ENCODE measurements at regions of chr9 and their contacts with region 1.

Region 1: DNA sequence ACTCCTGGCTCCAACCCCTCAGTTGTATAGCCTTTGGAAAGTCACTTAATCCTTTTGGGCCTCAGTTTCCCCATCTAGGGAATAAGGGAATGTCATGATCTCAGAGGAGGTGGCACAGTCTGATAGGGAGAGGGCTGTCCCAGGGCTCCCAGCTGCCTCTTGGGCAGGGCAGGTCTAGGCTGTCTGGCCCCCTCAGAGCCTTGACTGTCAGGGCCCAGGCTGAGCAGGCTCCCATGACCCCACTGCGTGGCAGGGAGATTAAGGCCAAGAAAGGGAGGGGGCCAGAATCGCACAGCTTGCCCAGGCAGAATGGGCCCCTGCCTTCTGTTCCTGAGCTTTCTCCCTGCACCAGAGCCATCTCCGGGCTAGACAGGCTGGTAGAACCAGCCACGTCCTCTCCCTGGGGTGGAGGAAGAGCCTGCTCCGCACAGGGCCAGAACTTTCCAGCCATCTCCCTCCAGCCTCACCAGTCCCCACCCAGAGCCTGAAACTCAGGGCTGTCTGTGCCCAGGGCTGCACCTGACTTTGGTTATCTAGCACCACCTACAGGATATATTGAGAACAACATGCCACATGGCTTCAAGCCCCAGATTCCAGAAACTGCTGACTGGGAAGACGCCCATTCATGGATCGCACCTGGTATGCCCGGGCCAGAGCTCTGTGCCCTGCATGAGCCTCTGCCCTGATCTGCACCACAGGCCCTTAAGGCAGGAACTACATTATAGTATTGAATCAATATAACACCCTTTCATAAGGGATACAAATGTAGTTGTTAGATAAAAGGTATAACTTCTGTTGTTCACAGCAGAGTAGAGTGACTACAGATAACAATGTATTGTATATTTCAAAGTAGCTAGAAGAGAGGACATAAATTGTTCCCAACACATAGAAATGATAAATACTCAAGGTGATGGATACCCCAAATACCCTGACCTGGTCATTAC is 32.0 kb downstream of the NAIF1 start:
- DNase-seq: peak; percentile 78
- H3K4me3 Mint-ChIP-seq: no peak overlapping the region
- H3K27ac Mint-ChIP-seq: peak overlapping the region; percentile 62
- H3K4me1 Mint-ChIP-seq: peaks cover 40% of the 10 kb centered on the region
- H3K27me3 Mint-ChIP-seq: no peaks in the 10 kb centered on the region

Region 2: GRCh38 chr9:127930231-127931091 is 104.6 kb before region 1 on chr9 and contains the start of gene PIP5KL1:
- CTCF ChIA-PET with region 1: interaction called, 18 read pairs
- intact Hi-C with region 1: no loop called
- DNase-seq: peak; percentile 61
- H3K4me3 Mint-ChIP-seq: peak within 1 kb of the TSS; percentile 62
- H3K27ac Mint-ChIP-seq: no peak within 1 kb of the TSS
- H3K4me1 Mint-ChIP-seq: peaks cover 35% of the 10 kb centered on the region
- H3K27me3 Mint-ChIP-seq: peaks cover 6% of the 10 kb centered on the region
- total RNA-seq, gene PIP5KL1: 1.1 to 1.8 TPM

Region 3: GRCh38 chr9:127955294-127956035 is 79.6 kb before region 1 on chr9:
- CTCF ChIA-PET with region 1: interaction called, 111 read pairs
- intact Hi-C with region 1: loop called (anchors 1 kb)
- DNase-seq: peak; percentile 96
- H3K4me3 Mint-ChIP-seq: peak overlapping the region; percentile 10
- H3K27ac Mint-ChIP-seq: peak overlapping the region; percentile 95
- H3K4me1 Mint-ChIP-seq: peaks cover 96% of the 10 kb centered on the region
- H3K27me3 Mint-ChIP-seq: no peaks in the 10 kb centered on the region

Region 4: DNA sequence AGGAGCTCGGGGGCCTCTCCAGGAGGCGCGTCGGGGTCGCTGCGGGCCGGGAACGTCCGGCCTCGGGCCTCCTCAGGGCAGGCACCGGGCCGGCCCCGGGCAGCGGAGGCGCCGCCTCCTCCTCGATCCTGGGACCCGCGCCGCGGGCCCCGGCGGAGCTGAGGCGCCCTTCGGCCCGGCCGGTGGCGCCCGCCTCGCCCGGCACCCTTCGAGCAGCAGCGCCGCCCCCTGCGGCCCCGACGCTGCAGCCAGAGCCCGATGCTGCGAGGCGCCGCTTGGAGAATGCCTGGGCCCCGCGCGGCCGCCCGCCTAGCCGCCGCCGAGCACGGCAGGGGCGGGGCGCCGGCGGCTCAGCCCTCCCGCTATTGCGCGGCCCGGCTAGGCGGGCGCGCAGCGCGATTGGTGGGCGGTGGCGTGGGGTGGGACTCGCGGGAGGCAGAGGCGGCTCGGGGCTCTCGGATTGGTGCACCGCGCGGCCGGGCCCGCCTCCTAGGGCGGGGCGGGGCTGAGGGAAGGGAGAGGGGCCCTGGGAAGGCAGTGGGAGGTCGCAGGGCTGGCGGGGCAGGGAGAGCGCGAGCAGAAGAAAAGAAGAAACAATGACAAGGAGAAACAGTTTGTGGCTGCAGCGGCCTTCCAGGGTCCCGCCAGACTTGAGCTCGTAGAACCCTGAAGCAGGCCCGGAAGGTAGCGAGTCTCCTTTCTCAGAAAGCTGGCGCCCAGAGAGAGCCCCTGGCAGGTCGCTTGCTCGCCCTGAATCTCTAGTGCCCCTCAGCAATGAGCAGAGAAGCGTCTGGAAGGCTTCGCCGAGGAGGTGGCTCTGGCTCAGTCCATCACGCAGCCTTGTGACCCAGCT is 54.2 kb before region 1 on chr9 and contains the start of gene EEIG1:
- CTCF ChIA-PET with region 1: interaction called, 142 read pairs
- intact Hi-C with region 1: no loop called
- DNase-seq: peak; percentile 98
- H3K4me3 Mint-ChIP-seq: peak within 1 kb of the TSS; percentile 98
- H3K27ac Mint-ChIP-seq: peak within 1 kb of the TSS; percentile 98
- H3K4me1 Mint-ChIP-seq: peaks cover 44% of the 10 kb centered on the region
- H3K27me3 Mint-ChIP-seq: no peaks in the 10 kb centered on the region
- total RNA-seq, gene EEIG1: 61.0 to 70.8 TPM

Region 5: DNA sequence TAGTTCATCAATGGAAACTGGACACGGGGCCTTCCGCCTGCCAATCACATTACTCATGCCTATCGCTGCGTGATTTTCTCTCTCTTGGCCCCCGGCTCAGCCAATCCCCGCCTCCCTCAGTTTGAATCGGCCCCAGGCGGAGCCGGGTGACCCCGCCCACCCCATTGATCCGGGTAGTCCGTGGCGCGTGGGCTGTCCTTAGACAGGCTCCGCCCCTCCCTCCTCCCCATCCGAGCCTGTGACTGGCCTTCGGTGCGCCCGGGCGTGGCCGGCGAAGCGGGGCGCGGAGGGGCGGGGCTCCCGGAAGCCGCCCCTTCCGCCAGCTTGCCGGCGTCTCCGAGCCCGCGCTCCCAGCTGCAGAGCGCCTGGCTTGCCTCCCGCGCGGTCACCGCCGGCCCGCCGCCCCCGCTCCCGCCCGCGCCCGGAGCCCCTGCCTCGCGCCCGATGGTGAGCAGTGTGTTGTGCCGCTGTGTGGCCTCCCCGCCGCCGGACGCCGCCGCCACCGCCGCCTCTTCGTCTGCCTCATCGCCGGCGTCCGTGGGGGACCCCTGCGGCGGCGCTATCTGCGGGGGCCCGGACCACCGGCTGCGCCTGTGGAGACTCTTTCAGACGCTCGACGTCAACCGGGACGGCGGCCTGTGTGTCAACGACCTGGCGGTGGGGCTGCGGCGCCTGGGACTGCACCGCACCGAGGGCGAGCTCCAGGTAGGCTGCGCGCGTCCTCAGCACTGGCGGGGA is 33.0 kb after region 1 on chr9 and contains the start of gene SLC25A25:
- CTCF ChIA-PET with region 1: interaction called, 18 read pairs
- intact Hi-C with region 1: loop called (anchors 1 kb)
- DNase-seq: peak; percentile 100
- H3K4me3 Mint-ChIP-seq: no peak within 1 kb of the TSS
- H3K27ac Mint-ChIP-seq: peak within 1 kb of the TSS; percentile 86
- H3K4me1 Mint-ChIP-seq: peaks cover 56% of the 10 kb centered on the region
- H3K27me3 Mint-ChIP-seq: no peaks in the 10 kb centered on the region
- total RNA-seq, gene SLC25A25: 12.0 to 12.7 TPM

Region 6: GRCh38 chr9:128635283-128636023 is 600.4 kb after region 1 on chr9:
- CTCF ChIA-PET with region 1: no interaction called
- intact Hi-C with region 1: no loop called
- DNase-seq: no peak
- H3K4me3 Mint-ChIP-seq: no peak overlapping the region
- H3K27ac Mint-ChIP-seq: no peak overlapping the region
- H3K4me1 Mint-ChIP-seq: no peaks in the 10 kb centered on the region
- H3K27me3 Mint-ChIP-seq: no peaks in the 10 kb centered on the region